IMR-90 (cell line): ENCODE measurements at regions of chr18 and their contacts with region 1.

Region 1: DNA sequence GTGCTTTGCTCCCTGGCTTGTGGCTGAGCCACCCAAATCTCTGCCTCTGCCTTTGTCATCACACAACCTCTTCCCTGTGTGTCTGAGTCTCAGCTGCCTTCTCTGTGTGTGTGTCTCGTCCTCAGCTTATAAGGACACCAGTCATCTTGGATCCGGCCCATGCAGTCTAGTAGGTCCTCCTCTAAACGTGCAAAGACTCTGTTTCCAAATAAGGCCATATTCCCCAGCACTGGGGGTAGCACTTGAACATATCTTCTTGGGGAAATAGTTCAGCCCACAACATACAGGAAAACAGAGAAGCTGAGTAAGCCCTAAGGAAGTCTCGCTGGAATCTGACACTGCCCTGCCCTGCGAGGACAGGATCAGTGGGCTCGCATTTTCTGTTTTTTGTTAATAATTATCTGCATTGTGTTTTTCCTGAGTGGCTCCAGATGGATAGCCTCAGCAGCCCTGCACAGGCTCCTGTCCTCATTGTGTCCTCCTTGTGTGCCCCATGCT is 42.1 kb downstream of the MTCL1 start:
- DNase-seq: peak; percentile 96
- ATAC-seq: peak; percentile 76
- H3K4me3 ChIP-seq: no peak overlapping the region
- H3K27ac ChIP-seq: peak overlapping the region; percentile 96
- H3K4me1 ChIP-seq: peaks cover 56% of the 10 kb centered on the region
- H3K27me3 ChIP-seq: no peaks in the 10 kb centered on the region
- CTCF ChIP-seq: no peak
- POLR2A ChIP-seq: peak; percentile 67
- RAD21 ChIP-seq: no peak

Region 2: GRCh38 chr18:8548186-8548585 is 199.3 kb before region 1 on chr18:
- CTCF ChIA-PET with region 1: no interaction called
- POLR2A ChIA-PET with region 1: no interaction called
- dilution Hi-C with region 1: no loop called
- in situ Hi-C with region 1: no loop called
- intact Hi-C with region 1: no loop called
- DNase-seq: peak; percentile 39
- ATAC-seq: no peak
- H3K4me3 ChIP-seq: no peak overlapping the region
- H3K27ac ChIP-seq: no peak overlapping the region
- H3K4me1 ChIP-seq: no peaks in the 10 kb centered on the region
- H3K27me3 ChIP-seq: peaks cover 8% of the 10 kb centered on the region
- CTCF ChIP-seq: no peak
- POLR2A ChIP-seq: no peak
- RAD21 ChIP-seq: no peak

Region 3: GRCh38 chr18:8890957-8891464 is 143.5 kb after region 1 on chr18:
- CTCF ChIA-PET with region 1: no interaction called
- POLR2A ChIA-PET with region 1: no interaction called
- dilution Hi-C with region 1: no loop called
- in situ Hi-C with region 1: no loop called
- intact Hi-C with region 1: loop called (anchors 5 kb)
- DNase-seq: peak; percentile 97
- ATAC-seq: peak; percentile 95
- H3K4me3 ChIP-seq: no peak overlapping the region
- H3K27ac ChIP-seq: peak overlapping the region; percentile 75
- H3K4me1 ChIP-seq: peaks cover 10% of the 10 kb centered on the region; the same call in 1 of the 2 replicates
- H3K27me3 ChIP-seq: no peaks in the 10 kb centered on the region
- CTCF ChIP-seq: no peak
- POLR2A ChIP-seq: no peak
- RAD21 ChIP-seq: no peak